Motor neuron (in vitro differentiated cells): ENCODE measurements at regions of chr4 and their contacts with region 1.

Region 1: DNA sequence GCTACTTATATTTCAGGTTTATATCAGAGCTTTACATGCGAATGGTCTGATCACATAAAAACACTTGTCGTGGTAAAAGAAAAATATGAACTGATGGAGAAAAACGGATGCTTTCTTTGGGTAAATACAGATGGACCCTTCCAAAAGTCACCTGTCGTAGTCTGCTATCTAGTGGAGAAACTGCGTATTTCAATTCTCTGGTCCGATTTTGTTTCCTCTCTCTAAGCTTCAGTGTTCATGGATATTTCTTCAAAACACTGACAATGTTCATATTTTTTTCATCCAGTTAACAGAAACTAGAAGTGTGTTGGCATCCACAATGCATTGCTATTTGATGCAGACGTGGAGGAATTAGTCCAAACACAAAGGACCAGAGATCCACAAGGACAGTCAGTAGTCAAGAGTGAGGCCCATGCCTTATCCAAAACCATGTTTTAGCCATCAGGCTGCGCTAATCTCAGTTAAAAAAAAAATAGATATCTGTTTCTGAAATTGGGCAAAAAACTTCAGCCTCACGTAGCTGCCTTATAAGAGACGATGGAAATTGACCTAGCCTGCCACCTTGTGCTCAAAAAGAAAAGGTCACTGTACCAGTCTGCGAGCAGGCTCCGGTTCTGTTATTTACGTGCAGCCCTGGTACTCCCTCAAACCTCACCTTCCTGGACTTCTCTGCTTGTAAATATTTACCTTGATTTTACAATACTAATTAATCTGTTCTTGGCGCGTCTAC is 16.0 kb downstream of the MEPE start:
- ATAC-seq: peak; percentile 74 to 98 (median 82)
- H3K4me3 ChIP-seq: peak overlapping the region in 2 of 5 donors; percentile 4 to 14
- H3K27ac ChIP-seq: no peak overlapping the region
- H3K4me1 ChIP-seq: peaks cover 0 to 3% of the 10 kb centered on the region in 2 donors

Region 2: GRCh38 chr4:86908251-86908657 is 940.5 kb before region 1 on chr4:
- in situ Hi-C with region 1: loop called in 1 of 9 experiments (anchors 25 kb)
- ATAC-seq: no peak
- H3K4me3 ChIP-seq: no peak overlapping the region
- H3K27ac ChIP-seq: no peak overlapping the region
- H3K4me1 ChIP-seq: no peaks in the 10 kb centered on the region

Region 3: GRCh38 chr4:87353592-87353991 is 495.2 kb before region 1 on chr4:
- in situ Hi-C with region 1: loop called in 1 of 9 experiments (anchors 25 kb)
- ATAC-seq: peak in 4 of 8 experiments; percentile 64 to 93 (median 85)
- H3K4me3 ChIP-seq: no peak overlapping the region
- H3K27ac ChIP-seq: no peak overlapping the region
- H3K4me1 ChIP-seq: no peaks in the 10 kb centered on the region

Region 4: GRCh38 chr4:87679449-87680169 is 169.2 kb before region 1 on chr4:
- in situ Hi-C with region 1: loop called in 4 of 9 experiments (anchors 10 to 25 kb)
- ATAC-seq: peak in 5 of 8 experiments; percentile 46 to 77 (median 59)
- H3K4me3 ChIP-seq: no peak overlapping the region
- H3K27ac ChIP-seq: no peak overlapping the region
- H3K4me1 ChIP-seq: peaks cover 0 to 3% of the 10 kb centered on the region in 2 donors

Region 5: DNA sequence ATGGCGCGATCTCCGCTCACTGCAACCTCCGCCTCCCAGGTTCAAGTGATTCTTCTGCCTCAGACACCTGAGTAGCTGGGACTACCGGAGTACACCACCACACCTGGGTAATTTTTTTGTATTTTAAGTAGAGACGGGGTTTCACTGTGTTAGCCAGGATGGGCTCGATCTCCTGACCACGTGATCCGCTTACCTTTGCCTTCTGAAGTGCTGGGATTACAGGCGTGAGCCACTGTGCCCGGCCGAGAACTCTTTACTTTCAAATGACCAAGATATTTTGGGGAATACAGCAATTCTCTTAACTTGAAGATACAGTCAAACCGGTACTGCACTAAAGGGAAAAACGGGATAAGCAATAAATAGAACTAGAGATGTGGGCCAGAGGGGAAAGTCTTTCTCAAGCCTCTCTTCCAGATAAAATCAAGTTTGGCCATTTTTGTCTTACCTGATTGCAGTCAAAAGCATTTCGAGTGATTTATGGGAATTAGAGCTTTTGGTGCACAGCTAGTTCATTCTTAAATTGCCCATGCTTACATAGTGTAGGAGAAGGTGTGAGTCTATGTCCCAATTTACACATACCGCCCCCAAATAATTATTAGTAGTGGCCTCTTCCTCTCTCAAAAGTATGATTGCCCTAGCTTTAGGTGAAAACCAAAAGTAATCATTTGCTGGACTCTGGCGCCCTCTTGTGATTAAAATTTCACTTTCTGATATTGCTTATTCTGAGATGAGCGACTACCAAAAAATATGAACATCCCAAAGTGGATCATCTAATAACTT is 362.9 kb after region 1 on chr4:
- in situ Hi-C with region 1: loop called in 7 of 9 experiments (anchors 10 to 25 kb)
- ATAC-seq: peak in 7 of 8 experiments; percentile 33 to 69 (median 52)
- H3K4me3 ChIP-seq: no peak overlapping the region
- H3K27ac ChIP-seq: no peak overlapping the region
- H3K4me1 ChIP-seq: no peaks in the 10 kb centered on the region